Right ventricle myocardium superior (tissue), 1 donor: ENCODE measurements at regions of chr1 and their contacts with region 1.

Region 1: DNA sequence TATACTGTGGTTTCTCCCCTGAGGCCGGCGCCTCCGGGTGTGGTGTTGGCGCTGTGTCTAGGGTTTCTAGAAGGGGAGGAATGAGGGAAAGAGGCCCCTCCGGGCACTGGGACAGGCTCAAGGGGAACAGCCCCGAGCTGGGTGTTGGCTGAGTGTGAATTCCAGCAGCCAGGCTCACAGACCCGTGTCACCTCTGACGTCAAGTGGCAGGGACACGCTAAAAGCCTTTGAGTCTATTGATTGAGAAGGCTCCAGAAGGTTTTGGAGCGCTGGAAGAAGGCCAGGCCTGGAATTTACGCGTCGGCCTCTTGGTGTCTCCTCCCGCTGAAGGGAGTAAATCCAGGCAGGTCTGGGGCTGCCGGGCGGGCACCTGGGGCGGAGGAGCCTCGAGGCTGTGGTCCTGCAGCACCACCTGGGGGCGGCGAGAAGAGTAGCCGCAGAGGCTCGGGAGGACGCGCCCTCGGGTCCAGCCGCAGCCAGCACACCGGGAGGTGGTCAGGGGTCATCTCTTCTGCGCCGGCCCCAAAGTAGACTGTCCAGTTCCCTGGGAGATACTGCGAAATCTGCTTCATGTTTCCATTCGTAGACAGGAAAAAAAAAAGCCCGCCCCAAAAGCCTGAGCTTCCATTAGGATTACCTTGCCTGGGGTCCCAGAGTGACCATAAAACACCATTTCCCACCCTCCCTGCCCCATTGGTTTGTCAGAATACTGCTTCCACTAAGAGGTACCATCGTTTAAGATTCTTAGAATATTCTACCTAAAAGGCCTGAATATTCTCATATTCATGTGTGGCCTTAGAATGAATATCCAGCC is 61.7 kb downstream of the TLR5 start:
- DNase-seq: peak; percentile 88
- ATAC-seq: peak; percentile 97

Region 2: DNA sequence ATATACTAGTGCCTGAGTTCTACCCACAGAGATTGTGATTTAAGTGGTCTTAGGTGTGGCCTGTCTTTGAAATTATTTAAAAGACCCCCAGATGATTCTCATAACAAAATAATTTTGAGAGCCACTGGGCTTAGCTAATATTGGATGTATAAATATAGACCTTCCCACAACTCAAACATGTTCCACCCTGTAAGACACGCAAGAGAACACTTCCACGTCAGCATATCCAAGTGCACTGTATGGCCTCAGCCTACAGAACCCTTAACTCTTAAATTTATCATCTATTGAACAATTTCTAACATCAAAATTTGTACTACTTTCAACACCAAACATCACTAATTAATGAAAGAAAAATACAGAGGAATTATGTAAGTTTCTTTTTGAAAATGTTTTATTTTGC is 341.9 kb before region 1 on chr1:
- intact Hi-C with region 1: loop called (anchors 2 kb)
- DNase-seq: no peak
- ATAC-seq: no peak

Region 3: GRCh38 chr1:222792744-222793143 is 288.6 kb before region 1 on chr1:
- intact Hi-C with region 1: loop called (anchors 5 kb)
- DNase-seq: no peak
- ATAC-seq: no peak

Region 4: DNA sequence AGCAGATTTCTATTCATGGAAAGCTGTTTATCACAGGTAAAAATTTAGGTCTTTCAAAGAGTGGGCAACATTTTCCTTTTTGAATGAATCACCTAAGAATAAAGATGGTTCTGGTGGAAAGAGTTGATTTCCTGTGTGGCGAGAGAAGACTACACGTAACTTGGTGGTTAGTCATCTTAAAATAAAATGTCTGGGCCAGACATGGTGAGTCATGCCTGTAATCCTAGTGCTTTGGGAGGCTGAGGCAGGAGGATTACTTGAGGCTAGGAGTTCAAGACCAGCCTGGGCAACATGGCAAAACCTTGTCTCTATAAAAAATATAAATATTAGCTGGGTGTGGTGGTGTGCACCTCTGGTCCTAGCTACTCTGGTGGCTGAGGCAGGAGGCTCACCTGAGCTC is 200.8 kb before region 1 on chr1:
- intact Hi-C with region 1: no loop called
- DNase-seq: no peak
- ATAC-seq: no peak